ENCODE measurements at regions of chr9 and their contacts with region 1.

Region 1: DNA sequence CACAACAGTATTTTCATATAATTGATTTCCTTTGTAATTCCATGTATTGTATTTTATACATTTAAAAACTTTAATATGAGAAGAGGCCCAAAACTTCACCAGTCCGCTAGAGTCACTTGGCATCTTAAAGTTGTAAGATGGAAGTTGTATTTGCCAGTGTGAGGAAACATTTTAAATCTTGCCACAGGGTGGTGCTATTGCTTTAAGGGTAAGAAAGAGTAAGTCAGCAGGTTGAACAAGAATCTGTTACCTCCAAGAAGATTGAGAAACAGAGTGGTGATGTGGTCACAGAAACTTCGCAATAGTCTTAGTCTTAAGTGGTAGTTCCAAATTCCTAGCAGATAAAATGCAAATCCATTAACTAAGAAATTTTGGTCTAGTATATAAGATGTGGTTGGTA is 39.8 kb upstream of the RANBP6 start:
- DNase-seq: peak; percentile 52
- ATAC-seq: peak; percentile 65
- H3K4me3 Mint-ChIP-seq: no peak overlapping the region
- H3K27ac Mint-ChIP-seq: no peak overlapping the region
- H3K4me1 Mint-ChIP-seq: peaks cover 2% of the 10 kb centered on the region
- H3K27me3 Mint-ChIP-seq: peaks cover 4% of the 10 kb centered on the region

Region 2: GRCh38 chr9:5799314-5799713 is 255.9 kb before region 1 on chr9:
- CTCF ChIA-PET with region 1: interaction called, 7 read pairs
- POLR2A ChIA-PET with region 1: no interaction called
- intact Hi-C with region 1: loop called in 1 of 2 experiments (anchors 5 kb)
- DNase-seq: no peak
- ATAC-seq: no peak
- H3K4me3 Mint-ChIP-seq: no peak overlapping the region
- H3K27ac Mint-ChIP-seq: no peak overlapping the region
- H3K4me1 Mint-ChIP-seq: peaks cover 22% of the 10 kb centered on the region
- H3K27me3 Mint-ChIP-seq: no peaks in the 10 kb centered on the region

Region 3: GRCh38 chr9:6015278-6016157 is 39.7 kb before region 1 on chr9 and contains the start of gene RANBP6:
- CTCF ChIA-PET with region 1: interaction called, 4 read pairs
- POLR2A ChIA-PET with region 1: no interaction called
- intact Hi-C with region 1: loop called in 1 of 2 experiments (anchors 2 kb)
- DNase-seq: peak; percentile 97
- ATAC-seq: peak; percentile 94
- H3K4me3 Mint-ChIP-seq: peak within 1 kb of the TSS; percentile 95
- H3K27ac Mint-ChIP-seq: peak within 1 kb of the TSS; percentile 99
- H3K4me1 Mint-ChIP-seq: peaks cover 28% of the 10 kb centered on the region
- H3K27me3 Mint-ChIP-seq: no peaks in the 10 kb centered on the region
- total RNA-seq, gene RANBP6: 11.7 to 18.2 TPM

Region 4: GRCh38 chr9:6068983-6069382 is 13.8 kb after region 1 on chr9:
- CTCF ChIA-PET with region 1: interaction called, 15 read pairs
- POLR2A ChIA-PET with region 1: no interaction called
- intact Hi-C with region 1: no loop called
- DNase-seq: peak; percentile 17
- ATAC-seq: peak; percentile 99
- H3K4me3 Mint-ChIP-seq: peak overlapping the region; percentile 27
- H3K27ac Mint-ChIP-seq: peak overlapping the region; percentile 77
- H3K4me1 Mint-ChIP-seq: peaks cover 21% of the 10 kb centered on the region
- H3K27me3 Mint-ChIP-seq: no peaks in the 10 kb centered on the region

Region 5: DNA sequence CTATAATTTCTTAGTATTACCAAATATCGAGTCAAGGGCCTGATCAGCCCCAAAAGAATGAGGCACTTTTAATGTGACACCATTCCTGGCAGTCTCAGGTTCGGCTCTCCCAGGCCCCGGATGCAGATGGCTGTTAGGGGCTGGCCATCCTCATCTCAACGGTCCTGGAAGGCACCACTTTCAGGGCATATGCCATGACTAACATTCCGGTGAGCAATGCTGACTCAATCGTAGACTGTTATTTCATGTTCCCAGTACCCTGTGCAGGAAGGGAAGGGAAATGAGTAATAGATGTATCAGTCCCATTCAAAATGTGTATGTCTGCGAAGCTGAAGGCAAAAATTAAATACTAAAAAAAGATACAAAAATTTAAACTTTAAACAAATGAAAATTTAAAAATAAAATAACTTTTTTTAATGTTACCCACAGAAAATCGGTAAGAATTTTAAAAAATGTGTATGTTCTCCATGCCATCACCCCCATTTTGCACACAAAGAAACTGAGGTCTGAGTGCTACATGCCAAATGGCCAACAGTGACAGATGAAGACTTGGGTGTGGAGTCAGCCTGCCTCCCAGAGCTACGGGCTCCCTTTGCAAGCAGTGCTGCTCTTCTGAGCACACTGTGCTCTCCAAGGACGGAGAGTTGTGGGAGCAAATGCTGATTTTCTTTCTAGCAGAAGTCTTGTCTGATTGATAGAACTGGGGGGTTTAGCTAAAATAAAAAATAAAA is 511.4 kb after region 1 on chr9:
- CTCF ChIA-PET with region 1: interaction called, 3 read pairs
- POLR2A ChIA-PET with region 1: no interaction called
- intact Hi-C with region 1: loop called (anchors 1 kb)
- DNase-seq: peak; percentile 74
- ATAC-seq: peak; percentile 84
- H3K4me3 Mint-ChIP-seq: peak overlapping the region; percentile 44
- H3K27ac Mint-ChIP-seq: peak overlapping the region; percentile 87
- H3K4me1 Mint-ChIP-seq: peaks cover 21% of the 10 kb centered on the region
- H3K27me3 Mint-ChIP-seq: peaks cover 5% of the 10 kb centered on the region